ENCODE measurements at regions of chr1 and their contacts with region 1.

Region 1: DNA sequence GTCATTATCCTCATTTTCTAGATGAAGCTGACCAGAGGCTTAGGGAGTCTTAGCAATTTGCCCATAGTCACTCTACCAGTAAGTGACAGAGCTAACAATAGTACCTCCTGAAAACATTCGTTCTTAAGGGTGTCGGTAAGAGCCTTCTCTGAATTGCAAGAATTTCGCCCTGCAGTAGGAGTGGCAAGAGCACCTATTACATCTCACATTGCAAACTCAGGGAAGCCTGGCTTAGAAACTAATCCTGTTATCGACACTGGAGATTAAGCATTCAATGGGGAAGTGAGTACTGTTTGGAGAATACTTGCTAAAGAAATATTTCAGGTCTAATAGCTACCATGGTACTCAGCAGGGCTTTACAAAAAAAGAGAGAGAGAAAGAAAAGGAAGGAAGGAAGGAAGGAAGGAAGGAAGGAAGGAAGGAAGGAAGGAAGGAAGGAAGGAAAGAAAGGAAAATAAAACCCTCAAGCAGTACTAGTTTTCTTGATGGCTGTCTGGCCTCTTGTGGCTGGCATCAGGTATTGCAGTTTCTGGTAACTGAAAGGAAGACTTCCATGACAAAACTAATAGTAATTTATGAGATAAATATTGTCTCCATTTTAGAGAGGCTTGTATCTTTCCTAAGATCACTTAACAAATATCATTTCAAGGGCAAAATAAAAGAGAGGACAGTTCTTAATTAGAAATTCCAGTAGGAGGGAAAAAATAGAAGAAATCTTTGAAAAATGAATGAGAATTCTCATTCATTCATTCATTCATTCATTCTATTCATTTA is 10.4 kb downstream of the C1orf226 start:
- DNase-seq: peak; percentile 40 to 65
- ATAC-seq: peak in 1 of 2 experiments; percentile 76; a peak in 3 of 6 replicates
- H3K4me3 ChIP-seq: no peak overlapping the region
- H3K27ac ChIP-seq: no peak overlapping the region
- H3K4me1 ChIP-seq: no peaks in the 10 kb centered on the region
- CTCF ChIP-seq: peak; percentile 82
- EP300 ChIP-seq: no peak
- POLR2A ChIP-seq: no peak
- RAD21 ChIP-seq: peak; percentile 76 to 81

Region 2: DNA sequence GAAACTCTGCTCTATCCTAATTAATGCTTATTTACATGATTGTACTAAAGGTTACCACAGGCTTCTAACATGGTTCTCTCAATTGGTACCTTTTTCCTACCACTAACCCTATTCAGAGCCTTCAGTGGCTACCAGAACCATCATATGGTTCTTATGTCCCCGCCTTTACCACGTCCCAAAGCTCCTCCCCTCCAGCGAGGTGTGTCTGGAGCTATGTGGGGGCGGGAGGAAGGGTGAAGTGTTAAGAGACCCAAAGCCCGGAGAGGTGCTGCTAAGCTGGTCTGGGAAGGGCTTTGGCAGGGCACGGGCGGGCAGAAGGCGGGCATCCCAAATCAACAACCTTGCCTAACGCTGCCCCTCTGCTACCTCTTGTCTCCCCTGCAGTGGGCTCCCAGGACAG is 25.3 kb before region 1 on chr1:
- CTCF ChIA-PET with region 1: interaction called, 10 read pairs
- POLR2A ChIA-PET with region 1: no interaction called
- DNase-seq: no peak
- ATAC-seq: no peak
- H3K4me3 ChIP-seq: no peak overlapping the region
- H3K27ac ChIP-seq: no peak overlapping the region
- H3K4me1 ChIP-seq: no peaks in the 10 kb centered on the region
- CTCF ChIP-seq: no peak
- EP300 ChIP-seq: no peak
- POLR2A ChIP-seq: no peak
- RAD21 ChIP-seq: no peak

Region 3: DNA sequence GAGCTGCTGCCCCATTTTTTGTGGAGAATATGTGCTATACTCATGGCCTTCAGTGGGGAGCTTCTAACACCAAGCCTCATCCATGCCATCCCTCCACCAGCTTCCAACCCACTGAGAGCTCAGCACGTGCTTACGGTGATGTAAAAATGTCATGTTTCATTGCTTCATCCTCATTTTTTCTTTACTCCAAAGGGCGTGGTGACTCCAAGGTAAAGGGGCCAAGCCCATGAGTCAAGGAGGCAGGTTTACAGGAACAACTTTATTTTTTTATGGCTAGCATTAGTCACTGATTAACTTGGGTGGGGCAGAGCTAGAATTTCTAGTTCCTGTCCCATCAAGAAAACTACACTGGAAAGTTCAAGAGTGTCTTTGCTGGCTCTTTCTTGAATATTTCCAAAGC is 10.6 kb before region 1 on chr1 and contains the start of gene C1orf226:
- CTCF ChIA-PET with region 1: interaction called, 35 read pairs
- POLR2A ChIA-PET with region 1: no interaction called
- DNase-seq: peak; percentile 17 to 71
- ATAC-seq: peak in 1 of 2 experiments; percentile 40; a peak in 3 of 6 replicates
- H3K4me3 ChIP-seq: no peak within 1 kb of the TSS
- H3K27ac ChIP-seq: peak within 1 kb of the TSS; percentile 51 to 70; a peak in 5 of 6 replicates
- H3K4me1 ChIP-seq: peaks cover 20% of the 10 kb centered on the region
- CTCF ChIP-seq: no peak
- EP300 ChIP-seq: no peak
- POLR2A ChIP-seq: no peak
- RAD21 ChIP-seq: no peak
- polyA plus RNA-seq, gene C1orf226: 0.37 and 0.56 TPM in 2 replicates

Measured in A549 (cell line).